H1 (cell line): ENCODE measurements at regions of chr10 and their contacts with region 1.

Region 1: DNA sequence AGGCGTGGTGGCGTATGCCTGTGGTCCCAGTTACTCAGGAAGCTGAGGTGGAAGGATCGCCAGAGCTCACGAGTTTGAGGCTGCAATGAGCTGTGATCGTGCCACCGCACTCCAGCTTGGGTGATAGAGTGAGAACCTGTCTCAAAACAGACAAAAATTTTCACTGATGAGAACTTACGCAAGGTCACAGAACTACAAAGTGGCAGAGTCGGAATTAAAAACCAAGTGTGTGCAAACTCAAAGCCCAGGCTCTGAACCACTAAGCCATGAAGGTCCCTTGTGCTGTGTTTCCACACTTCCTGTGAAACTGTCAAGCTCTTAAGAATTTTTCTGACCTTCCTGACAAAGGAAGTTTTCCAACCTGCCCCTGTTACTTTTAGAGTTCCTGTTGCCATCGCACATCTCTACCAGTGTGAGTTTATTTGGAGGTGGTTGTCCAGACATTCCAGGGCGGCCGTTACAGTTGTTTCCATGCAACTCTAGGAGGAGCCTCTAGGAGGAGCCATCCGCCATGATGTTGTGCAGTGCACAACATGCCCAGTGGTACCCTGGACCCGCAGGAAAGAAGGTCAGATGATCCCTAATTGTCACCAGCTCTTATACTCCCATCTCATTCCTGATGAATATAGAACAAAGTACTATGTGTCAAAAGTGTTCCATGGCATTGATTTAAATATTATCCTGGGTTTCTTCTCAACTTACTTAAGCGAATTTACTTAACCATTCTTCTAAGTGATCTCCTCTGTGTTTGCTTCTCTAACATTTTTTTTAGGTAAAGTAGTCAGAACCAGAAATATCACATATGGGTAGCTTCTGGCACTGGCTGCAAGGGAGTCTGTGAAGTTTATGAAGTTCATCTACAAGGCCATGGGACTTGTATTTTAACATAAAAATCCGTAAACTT is 49.0 kb upstream of the LYZL1 start:
- DNase-seq: peak in 1 of 2 experiments; percentile 76
- H3K4me3 ChIP-seq: no peak overlapping the region
- H3K27ac ChIP-seq: no peak overlapping the region
- H3K4me1 ChIP-seq: no peaks in the 10 kb centered on the region
- H3K27me3 ChIP-seq: no peaks in the 10 kb centered on the region
- CTCF ChIP-seq: peak; percentile 77 to 83 (median 80)
- EP300 ChIP-seq: no peak
- POLR2A ChIP-seq: no peak
- RAD21 ChIP-seq: peak; percentile 77 to 83

Region 2: DNA sequence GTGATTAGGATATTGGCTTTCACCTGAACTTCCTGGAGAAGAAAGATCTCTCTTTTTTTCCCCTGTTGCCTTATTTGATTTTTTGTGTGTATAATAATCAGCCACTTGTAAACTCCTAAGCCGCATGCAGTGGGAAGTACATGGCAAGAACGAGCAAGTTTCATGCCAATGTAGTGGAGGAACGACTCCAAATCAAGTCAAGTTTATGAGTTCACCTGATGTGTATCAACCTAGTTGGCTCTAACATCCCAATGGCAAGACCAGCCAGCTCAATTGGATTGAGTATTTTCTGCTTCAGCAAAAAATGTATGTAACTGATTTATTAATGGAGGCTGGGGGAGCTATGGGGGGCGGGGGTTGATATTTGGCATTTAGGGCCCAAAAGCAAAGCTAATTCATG is 16.5 kb before region 1 on chr10:
- CTCF ChIA-PET with region 1: interaction called, 29 read pairs
- POLR2A ChIA-PET with region 1: no interaction called
- DNase-seq: no peak
- H3K4me3 ChIP-seq: no peak overlapping the region
- H3K27ac ChIP-seq: no peak overlapping the region
- H3K4me1 ChIP-seq: no peaks in the 10 kb centered on the region; a peak in 2 of 7 replicates
- H3K27me3 ChIP-seq: no peaks in the 10 kb centered on the region
- CTCF ChIP-seq: no peak
- EP300 ChIP-seq: no peak
- POLR2A ChIP-seq: no peak
- RAD21 ChIP-seq: no peak

Region 3: DNA sequence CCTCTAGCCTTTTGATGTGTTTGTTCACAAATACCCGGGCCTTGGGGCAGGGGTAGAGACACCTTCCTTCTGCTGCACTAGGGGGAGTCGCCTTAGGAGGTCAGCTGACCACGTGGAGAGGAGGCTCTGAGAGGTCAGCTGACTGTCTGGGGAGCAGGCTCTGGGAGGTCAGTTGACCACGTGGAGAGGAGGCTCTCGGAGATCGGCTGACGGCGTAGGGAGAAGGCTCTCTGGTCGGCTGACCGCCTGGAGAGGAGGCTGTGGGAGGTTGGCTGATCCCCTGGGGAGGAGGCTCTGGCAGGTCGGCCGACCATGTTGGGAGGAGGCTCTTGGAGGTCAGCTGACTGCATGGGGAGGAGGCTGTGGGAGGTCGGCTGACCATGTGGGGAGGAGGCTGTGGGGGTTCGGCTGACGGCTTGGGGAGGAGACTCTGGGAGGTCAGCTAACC is 10.5 kb before region 1 on chr10:
- CTCF ChIA-PET with region 1: interaction called, 29 read pairs
- POLR2A ChIA-PET with region 1: interaction called, 3 read pairs
- DNase-seq: no peak
- H3K4me3 ChIP-seq: no peak overlapping the region
- H3K27ac ChIP-seq: no peak overlapping the region
- H3K4me1 ChIP-seq: peaks cover 0 to 4% (median 0%) of the 10 kb centered on the region in 4 experiments; a peak in 3 of 7 replicates
- H3K27me3 ChIP-seq: no peaks in the 10 kb centered on the region
- CTCF ChIP-seq: no peak
- EP300 ChIP-seq: no peak
- POLR2A ChIP-seq: no peak
- RAD21 ChIP-seq: no peak

Region 4: GRCh38 chr10:29257106-29257783 is 17.4 kb after region 1 on chr10:
- CTCF ChIA-PET with region 1: interaction called, 94 read pairs
- POLR2A ChIA-PET with region 1: interaction called, 3 read pairs
- DNase-seq: no peak
- H3K4me3 ChIP-seq: no peak overlapping the region
- H3K27ac ChIP-seq: no peak overlapping the region
- H3K4me1 ChIP-seq: peaks cover 0 to 3% (median under 1%) of the 10 kb centered on the region in 4 experiments; a peak in 2 of 7 replicates
- H3K27me3 ChIP-seq: no peaks in the 10 kb centered on the region
- CTCF ChIP-seq: no peak
- EP300 ChIP-seq: no peak
- POLR2A ChIP-seq: no peak
- RAD21 ChIP-seq: no peak